PC-9 (cell line): ENCODE measurements at regions of chr1 and their contacts with region 1.

Region 1: GRCh38 chr1:51519048-51519864 is at the start of gene EPS15:
- DNase-seq: peak; percentile 65 to 89
- H3K4me3 ChIP-seq: peak within 1 kb of the TSS; percentile 100
- H3K27ac ChIP-seq: peak within 1 kb of the TSS; percentile 72
- H3K4me1 ChIP-seq: peaks cover 36% of the 10 kb centered on the region
- H3K27me3 ChIP-seq: no peaks in the 10 kb centered on the region
- CTCF ChIP-seq: no peak
- total RNA-seq, gene EPS15: 60.1 and 61.0 TPM in 2 replicates

Region 2: DNA sequence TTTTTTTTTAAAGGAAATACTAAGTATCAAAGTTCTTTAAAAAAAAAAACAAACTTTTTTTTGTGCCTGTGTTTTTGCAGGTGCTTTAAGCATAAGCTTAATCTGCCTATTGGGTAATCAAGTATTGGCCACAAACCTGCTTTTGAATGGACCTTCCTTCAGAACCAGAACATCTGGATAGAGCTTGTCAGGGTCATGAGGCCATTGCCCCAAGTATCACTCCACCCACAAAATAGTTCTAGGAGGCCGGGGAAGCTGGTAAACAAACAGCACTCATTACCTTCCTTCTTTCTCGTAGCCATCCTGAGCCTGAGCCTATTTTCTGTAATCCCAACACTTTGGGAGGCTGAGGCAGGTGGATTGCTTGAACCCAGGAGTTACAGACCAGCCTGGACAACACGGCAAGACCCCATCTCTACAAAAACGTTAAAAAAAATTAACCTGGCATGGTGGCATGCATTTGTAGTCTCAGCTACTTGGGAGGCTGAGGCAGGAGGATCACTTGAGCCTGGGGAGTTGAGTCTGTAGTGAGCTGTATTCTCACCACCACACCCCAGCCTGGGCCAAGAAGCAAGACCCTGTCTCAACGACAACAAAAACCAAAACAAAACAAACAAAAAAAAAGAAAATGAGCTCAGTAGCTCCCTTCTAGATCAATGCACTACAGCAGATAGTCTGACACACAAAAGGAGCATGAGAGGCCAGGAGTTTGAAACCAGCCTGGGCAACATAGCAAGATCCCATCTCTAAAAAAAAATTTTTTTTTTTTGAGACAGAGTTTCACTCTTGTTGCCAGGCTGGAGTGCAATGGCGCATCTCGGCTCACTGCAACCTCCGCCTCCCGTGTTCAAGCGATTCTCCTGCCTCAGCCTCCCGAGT is 33.9 kb after region 1 on chr1:
- CTCF ChIA-PET with region 1: interaction called, 10 read pairs
- POLR2A ChIA-PET with region 1: interaction called, 7 read pairs
- intact Hi-C with region 1: loop called (anchors 2 kb)
- DNase-seq: no peak
- H3K4me3 ChIP-seq: no peak overlapping the region
- H3K27ac ChIP-seq: no peak overlapping the region
- H3K4me1 ChIP-seq: peaks cover 46% of the 10 kb centered on the region
- H3K27me3 ChIP-seq: no peaks in the 10 kb centered on the region
- CTCF ChIP-seq: no peak